Mammary epithelial cell (primary cell): ENCODE measurements at regions of chr12 and their contacts with region 1.

Region 1: GRCh38 chr12:128783129-128783574 is 40.6 kb downstream of the SLC15A4 start:
- DNase-seq: no peak
- H3K4me3 ChIP-seq: no peak overlapping the region
- H3K27ac ChIP-seq: no peak overlapping the region
- H3K4me1 ChIP-seq: no peaks in the 10 kb centered on the region
- H3K27me3 ChIP-seq: no peaks in the 10 kb centered on the region
- CTCF ChIP-seq: no peak

Region 2: GRCh38 chr12:129911428-129912049 is 1128.4 kb after region 1 on chr12:
- CTCF ChIA-PET with region 1: no interaction called
- dilution Hi-C with region 1: no loop called
- in situ Hi-C with region 1: no loop called
- intact Hi-C with region 1: loop called (anchors 5 kb)
- DNase-seq: no peak
- H3K4me3 ChIP-seq: no peak overlapping the region
- H3K27ac ChIP-seq: no peak overlapping the region
- H3K4me1 ChIP-seq: no peaks in the 10 kb centered on the region
- H3K27me3 ChIP-seq: no peaks in the 10 kb centered on the region
- CTCF ChIP-seq: peak in 1 of 2 donors; percentile 51

Region 3: DNA sequence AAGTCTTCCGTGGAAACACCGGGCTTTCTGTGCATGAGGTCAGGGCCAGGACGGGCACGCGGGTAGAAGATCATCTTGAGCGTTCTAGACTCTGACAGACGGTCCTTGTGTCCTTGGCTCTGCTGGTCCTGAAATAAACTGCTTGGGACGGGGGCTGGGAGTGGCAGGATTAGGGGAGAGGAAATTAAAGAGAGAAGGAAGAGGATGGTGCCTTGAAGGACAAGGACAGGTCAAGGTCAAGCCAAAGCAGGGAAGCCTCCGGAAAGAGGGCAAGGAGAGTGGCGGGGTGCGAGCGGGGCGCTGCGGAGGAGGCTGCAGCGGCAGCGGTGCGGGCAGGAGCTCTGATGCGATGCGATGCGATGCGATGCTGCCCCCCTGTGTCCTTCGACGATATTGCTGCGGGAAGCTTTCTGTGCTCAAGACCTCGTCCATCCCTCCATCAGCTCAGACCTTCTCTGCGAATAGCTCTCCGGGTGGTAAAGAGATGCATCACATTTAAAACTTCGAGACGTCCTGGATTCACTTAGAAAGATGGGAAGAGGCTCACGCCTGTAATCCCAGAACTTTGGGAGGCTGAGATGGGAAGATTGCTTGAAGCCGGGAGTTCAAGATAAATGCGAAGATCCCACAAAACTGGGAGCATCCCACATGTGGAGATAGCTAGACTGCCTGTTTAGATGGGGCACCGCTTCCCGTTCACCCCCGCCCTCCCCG is 1230.8 kb after region 1 on chr12:
- CTCF ChIA-PET with region 1: no interaction called
- dilution Hi-C with region 1: no loop called
- in situ Hi-C with region 1: no loop called
- intact Hi-C with region 1: loop called (anchors 1 kb)
- DNase-seq: peak; percentile 11
- H3K4me3 ChIP-seq: no peak overlapping the region
- H3K27ac ChIP-seq: no peak overlapping the region
- H3K4me1 ChIP-seq: no peaks in the 10 kb centered on the region
- H3K27me3 ChIP-seq: no peaks in the 10 kb centered on the region
- CTCF ChIP-seq: peak; percentile 46 to 55